Left ventricle myocardium superior (tissue), 1 donor: ENCODE measurements at regions of chr13 and their contacts with region 1.

Region 1: GRCh38 chr13:26985285-26985878 is 186.2 kb downstream of the USP12 start:
- DNase-seq: no peak
- ATAC-seq: peak; percentile 69

Region 2: GRCh38 chr13:26062844-26063444 is 922.4 kb before region 1 on chr13:
- intact Hi-C with region 1: no loop called
- DNase-seq: no peak
- ATAC-seq: peak; percentile 84

Region 3: GRCh38 chr13:26882731-26883130 is 102.7 kb before region 1 on chr13:
- intact Hi-C with region 1: no loop called
- DNase-seq: no peak
- ATAC-seq: no peak

Region 4: DNA sequence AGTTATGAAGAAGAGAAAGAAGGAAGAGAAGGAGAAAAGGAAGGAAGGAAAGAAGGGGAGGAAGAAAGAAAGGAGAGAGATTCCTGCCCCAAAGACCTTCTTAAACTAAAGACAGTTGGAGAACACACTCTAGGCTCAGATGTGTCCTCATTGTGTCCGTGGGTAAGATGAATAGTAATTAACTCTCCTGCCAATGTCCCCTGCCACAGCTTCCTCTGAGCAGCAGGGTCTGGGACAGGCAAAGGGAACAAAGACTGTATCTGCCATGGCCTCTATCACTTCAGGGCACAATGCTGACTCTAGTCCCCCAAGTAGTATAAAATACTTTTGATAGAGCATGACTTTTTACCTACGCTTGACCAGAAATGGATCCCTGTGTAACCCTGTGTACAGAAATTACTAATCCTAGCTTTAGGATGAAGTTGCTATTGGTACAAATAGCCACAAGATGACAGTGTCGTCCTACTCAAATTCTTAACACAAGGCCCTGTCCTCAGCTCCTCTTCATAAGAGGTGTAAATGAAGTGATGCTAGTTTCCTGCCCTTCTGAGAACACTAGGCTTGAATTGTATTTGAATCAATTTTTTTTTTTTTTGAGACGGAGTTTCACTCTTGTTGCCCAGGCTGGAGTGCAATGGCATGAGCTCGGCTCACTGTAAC is 38.6 kb before region 1 on chr13:
- intact Hi-C with region 1: loop called (anchors 2 kb)
- DNase-seq: no peak
- ATAC-seq: peak; percentile 73

Region 5: GRCh38 chr13:27203854-27204253 is 218.5 kb after region 1 on chr13:
- intact Hi-C with region 1: loop called (anchors 10 kb)
- DNase-seq: no peak
- ATAC-seq: no peak

Region 6: DNA sequence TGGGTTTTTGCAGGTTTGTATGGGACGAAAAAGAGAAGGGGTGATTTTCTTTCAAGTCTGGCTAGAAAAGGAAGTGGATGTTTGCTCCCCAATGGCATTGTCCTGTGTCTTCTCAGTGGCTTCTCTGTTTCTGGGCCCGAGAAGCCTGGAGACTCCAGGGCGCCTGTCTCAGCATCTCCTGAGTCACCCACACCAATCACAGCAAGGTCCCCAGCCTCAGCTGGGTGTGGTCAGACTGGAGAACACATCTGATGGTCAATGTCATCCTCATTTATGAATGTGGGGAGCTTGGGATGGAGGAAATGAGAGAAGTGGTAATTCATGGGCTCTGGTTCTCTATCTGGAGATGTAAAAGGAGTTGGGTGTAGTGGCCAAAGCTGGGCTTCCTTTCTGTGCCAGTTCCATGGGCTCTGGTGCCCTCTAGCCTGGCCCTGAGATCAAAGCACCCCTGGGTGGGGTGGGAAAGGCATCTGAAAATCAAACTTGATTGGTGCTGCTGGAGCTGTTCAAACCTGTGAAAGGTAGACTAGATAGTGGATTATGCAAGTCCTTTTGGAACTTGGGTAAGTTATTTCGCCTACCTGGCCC is 298.6 kb after region 1 on chr13:
- intact Hi-C with region 1: loop called (anchors 10 kb)
- DNase-seq: no peak
- ATAC-seq: peak; percentile 83

Region 7: GRCh38 chr13:27362064-27362883 is 376.9 kb after region 1 on chr13:
- intact Hi-C with region 1: loop called (anchors 5 kb)
- DNase-seq: peak; percentile 93
- ATAC-seq: peak; percentile 95